ENCODE measurements at regions of chr6 and their contacts with region 1.

Region 1: DNA sequence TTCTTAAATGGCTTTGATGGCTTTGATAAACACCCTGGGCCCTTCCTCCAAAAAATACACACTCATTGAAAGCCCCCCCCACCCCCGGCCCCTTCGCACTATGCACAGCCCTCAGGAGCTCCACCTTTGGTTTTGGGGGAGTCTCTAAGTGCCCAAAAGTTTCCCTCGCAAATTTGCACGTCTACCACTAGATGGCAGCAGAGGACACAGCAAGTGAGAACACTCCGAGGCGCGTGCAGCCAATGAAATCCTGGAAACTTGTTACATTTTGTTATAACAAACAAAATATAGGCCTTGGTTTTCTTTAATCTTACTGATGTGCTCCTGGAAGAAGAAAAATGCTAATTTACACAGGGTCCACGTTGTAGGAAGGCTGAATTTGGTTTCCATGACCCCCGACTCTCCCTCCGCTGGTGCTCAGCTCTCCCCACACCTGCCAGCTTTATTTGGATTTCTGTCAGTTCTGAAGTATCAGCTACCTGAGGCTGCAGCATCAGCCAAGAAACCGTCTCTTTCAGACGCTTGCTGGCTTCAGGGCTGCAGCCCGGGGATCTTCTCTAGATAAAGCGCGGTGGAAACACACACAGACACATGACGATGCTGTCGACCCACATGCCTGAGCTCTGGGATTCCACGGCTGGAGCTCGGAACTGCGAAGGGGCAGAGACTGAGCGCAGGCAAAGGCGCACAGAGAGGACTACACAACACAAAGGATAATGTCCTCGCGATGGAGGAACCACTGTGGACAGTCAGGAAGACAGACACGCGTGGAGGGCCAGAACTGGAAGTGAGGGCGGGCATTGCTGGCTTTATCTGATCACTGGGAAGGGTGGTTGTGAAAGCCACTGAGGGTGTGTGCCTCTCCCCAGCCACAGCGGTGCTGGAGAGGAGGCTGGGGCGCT is 148.4 kb upstream of the RPS6KA2 start:
- DNase-seq: peak; percentile 60
- ATAC-seq: peak; percentile 71 to 81

Region 2: GRCh38 chr6:166907373-166907841 is 132.0 kb after region 1 on chr6:
- intact Hi-C with region 1: no loop called
- DNase-seq: no peak
- ATAC-seq: no peak

Region 3: GRCh38 chr6:166950443-166950821 is 175.0 kb after region 1 on chr6:
- intact Hi-C with region 1: loop called in 1 of 2 experiments (anchors 10 kb)
- DNase-seq: no peak
- ATAC-seq: peak; percentile 18 to 57

Region 4: GRCh38 chr6:166989427-166990032 is 214.1 kb after region 1 on chr6:
- intact Hi-C with region 1: loop called (anchors 5 to 10 kb)
- DNase-seq: no peak
- ATAC-seq: peak; percentile 50 to 53

Region 5: GRCh38 chr6:167141667-167142432 is 366.4 kb after region 1 on chr6:
- intact Hi-C with region 1: loop called in 1 of 2 experiments (anchors 5 kb)
- DNase-seq: peak; percentile 42
- ATAC-seq: peak; percentile 83 to 88

Measured in left cardiac atrium (tissue), 4 donors.